ENCODE measurements at regions of chr12 and their contacts with region 1.

Region 1: GRCh38 chr12:8088574-8088973 is 6.5 kb downstream of the NECAP1 start:
- DNase-seq: no peak
- H3K4me3 ChIP-seq: no peak overlapping the region
- CTCF ChIP-seq: no peak
- POLR2A ChIP-seq: no peak

Region 2: GRCh38 chr12:8054816-8055215 is 33.8 kb before region 1 on chr12:
- intact Hi-C with region 1: loop called (anchors 2 kb)
- DNase-seq: no peak
- H3K4me3 ChIP-seq: no peak overlapping the region
- CTCF ChIP-seq: no peak
- POLR2A ChIP-seq: no peak